ENCODE measurements at regions of chr7 and their contacts with region 1.

Region 1: DNA sequence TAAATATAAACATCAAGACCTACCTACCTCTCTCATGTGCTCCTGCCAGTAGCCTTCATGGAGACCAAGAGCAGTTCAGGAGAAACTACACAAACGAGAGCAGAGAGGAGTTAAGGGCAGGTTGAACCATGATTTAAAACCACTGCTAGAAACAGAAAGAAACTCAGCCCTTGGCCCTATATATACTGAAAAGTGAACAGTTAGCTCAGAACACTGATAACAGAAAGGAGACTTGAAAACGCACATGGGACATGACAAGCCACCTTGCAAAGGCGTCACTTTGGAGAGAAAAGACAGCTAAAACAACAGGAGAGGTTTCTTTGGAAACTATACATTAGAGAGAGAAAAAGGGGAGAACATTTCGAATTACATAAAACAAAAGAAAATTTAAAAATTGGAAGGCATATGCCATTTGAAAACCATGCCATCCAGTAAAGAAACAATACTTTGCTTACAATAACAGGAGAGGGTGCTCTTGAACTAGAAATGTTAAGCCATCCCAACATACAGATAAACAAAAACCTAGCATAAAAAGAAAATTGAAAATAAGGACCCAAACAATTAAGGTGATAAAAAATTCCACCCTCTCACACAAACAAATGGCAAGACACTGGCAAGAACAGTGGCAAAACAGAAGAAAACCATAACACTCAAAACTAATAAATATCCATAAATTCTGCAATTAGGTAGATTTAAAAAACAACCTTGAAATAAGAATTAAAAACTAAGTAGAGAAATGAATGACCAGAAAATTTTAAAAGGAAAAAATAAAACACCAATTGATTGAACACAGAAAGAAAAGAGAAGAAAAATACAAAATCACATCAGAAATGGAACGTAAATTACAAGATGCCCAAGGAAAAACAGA is 232.7 kb downstream of the IMMP2L start:
- DNase-seq: no peak
- H3K4me3 ChIP-seq: no peak overlapping the region
- H3K27ac ChIP-seq: no peak overlapping the region
- H3K4me1 ChIP-seq: no peaks in the 10 kb centered on the region
- H3K27me3 ChIP-seq: no peaks in the 10 kb centered on the region
- CTCF ChIP-seq: no peak
- EP300 ChIP-seq: no peak
- POLR2A ChIP-seq: no peak

Region 2: DNA sequence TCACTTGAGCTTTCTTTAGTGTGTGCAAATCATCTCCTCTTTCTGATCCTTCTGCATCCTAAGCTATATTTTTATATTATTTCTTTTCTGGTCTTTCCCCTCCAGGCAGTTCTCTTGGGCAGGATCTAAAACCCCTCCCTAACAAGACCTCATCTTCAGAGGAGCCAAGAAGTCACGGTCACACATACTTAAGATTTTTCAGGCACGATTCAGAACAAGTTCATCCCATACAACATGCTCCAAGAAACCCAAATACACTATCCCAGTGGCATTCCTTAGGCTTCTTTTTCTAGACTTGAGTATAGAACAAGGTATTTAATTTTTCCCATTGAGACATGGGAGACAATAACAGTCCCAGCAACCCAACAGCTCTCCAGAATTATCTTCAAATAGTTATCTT is 1508.4 kb before region 1 on chr7:
- in situ Hi-C with region 1: no loop called
- intact Hi-C with region 1: no loop called
- DNase-seq: no peak
- H3K4me3 ChIP-seq: no peak overlapping the region
- H3K27ac ChIP-seq: no peak overlapping the region
- H3K4me1 ChIP-seq: no peaks in the 10 kb centered on the region
- H3K27me3 ChIP-seq: no peaks in the 10 kb centered on the region
- CTCF ChIP-seq: no peak
- EP300 ChIP-seq: no peak
- POLR2A ChIP-seq: no peak

Region 3: DNA sequence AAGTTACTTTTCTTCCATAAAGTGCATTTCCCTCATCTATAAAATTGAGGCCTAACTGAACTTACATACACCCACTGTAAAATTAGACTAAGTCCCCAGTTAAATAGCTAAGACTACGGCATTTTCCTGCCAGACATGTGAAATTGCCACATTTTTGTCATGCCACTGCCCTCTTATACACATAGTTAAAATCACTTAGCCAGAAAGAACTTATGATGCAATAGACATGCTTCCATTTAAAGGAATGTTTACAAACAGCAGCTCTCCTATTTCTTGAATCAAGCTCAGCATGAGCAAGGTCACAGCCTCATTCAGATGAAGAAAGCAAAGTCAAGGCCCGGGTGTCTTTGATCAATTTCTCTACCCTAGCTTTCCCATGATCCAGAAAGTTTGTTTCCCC is 63.0 kb before region 1 on chr7:
- in situ Hi-C with region 1: no loop called
- intact Hi-C with region 1: loop called (anchors 2 kb)
- DNase-seq: no peak
- H3K4me3 ChIP-seq: no peak overlapping the region
- H3K27ac ChIP-seq: no peak overlapping the region
- H3K4me1 ChIP-seq: no peaks in the 10 kb centered on the region
- H3K27me3 ChIP-seq: no peaks in the 10 kb centered on the region
- CTCF ChIP-seq: no peak
- EP300 ChIP-seq: no peak
- POLR2A ChIP-seq: no peak

Region 4: GRCh38 chr7:111517549-111517951 is 187.9 kb after region 1 on chr7:
- in situ Hi-C with region 1: no loop called
- intact Hi-C with region 1: no loop called
- DNase-seq: no peak
- H3K4me3 ChIP-seq: no peak overlapping the region
- H3K27ac ChIP-seq: no peak overlapping the region
- H3K4me1 ChIP-seq: no peaks in the 10 kb centered on the region
- H3K27me3 ChIP-seq: no peaks in the 10 kb centered on the region
- CTCF ChIP-seq: no peak
- EP300 ChIP-seq: no peak
- POLR2A ChIP-seq: no peak

Region 5: DNA sequence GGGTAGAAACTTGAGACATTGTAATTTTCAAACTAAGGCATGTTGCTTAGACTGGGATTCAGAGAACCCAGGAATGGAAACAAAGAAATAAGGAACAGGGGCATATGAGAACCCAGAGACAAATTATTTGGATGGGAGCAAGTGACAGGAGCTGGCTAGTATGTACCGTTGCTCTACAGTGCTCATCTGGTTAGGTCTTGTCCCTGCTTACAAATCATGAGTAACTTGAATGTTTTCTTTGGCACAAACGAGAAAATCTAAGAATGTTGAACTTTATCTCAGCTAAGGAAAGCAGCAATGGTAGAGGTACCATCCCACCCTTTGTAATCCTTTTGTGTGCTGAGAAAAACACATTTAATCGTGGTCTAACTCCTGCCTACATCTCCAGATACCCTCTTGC is 348.7 kb after region 1 on chr7:
- in situ Hi-C with region 1: no loop called
- intact Hi-C with region 1: no loop called
- DNase-seq: no peak
- H3K4me3 ChIP-seq: no peak overlapping the region
- H3K27ac ChIP-seq: no peak overlapping the region
- H3K4me1 ChIP-seq: no peaks in the 10 kb centered on the region
- H3K27me3 ChIP-seq: no peaks in the 10 kb centered on the region
- CTCF ChIP-seq: no peak
- EP300 ChIP-seq: no peak
- POLR2A ChIP-seq: no peak

Region 6: GRCh38 chr7:112449902-112450806 is 1120.6 kb after region 1 on chr7 and contains the start of gene IFRD1:
- in situ Hi-C with region 1: no loop called
- intact Hi-C with region 1: no loop called
- DNase-seq: peak; percentile 99
- H3K4me3 ChIP-seq: peak within 1 kb of the TSS; percentile 64 to 95 (median 82)
- H3K27ac ChIP-seq: peak within 1 kb of the TSS; percentile 95 to 100 (median 98)
- H3K4me1 ChIP-seq: peaks cover 15 to 48% (median 38%) of the 10 kb centered on the region in 4 donors
- H3K27me3 ChIP-seq: no peaks in the 10 kb centered on the region
- CTCF ChIP-seq: no peak
- EP300 ChIP-seq: no peak
- POLR2A ChIP-seq: peak; percentile 100
- total RNA-seq, gene IFRD1: 23.3 to 92.7 (median 52.0) TPM